CD8-positive, alpha-beta memory T cell (primary cell): ENCODE measurements at regions of chr3 and their contacts with region 1.

Region 1: DNA sequence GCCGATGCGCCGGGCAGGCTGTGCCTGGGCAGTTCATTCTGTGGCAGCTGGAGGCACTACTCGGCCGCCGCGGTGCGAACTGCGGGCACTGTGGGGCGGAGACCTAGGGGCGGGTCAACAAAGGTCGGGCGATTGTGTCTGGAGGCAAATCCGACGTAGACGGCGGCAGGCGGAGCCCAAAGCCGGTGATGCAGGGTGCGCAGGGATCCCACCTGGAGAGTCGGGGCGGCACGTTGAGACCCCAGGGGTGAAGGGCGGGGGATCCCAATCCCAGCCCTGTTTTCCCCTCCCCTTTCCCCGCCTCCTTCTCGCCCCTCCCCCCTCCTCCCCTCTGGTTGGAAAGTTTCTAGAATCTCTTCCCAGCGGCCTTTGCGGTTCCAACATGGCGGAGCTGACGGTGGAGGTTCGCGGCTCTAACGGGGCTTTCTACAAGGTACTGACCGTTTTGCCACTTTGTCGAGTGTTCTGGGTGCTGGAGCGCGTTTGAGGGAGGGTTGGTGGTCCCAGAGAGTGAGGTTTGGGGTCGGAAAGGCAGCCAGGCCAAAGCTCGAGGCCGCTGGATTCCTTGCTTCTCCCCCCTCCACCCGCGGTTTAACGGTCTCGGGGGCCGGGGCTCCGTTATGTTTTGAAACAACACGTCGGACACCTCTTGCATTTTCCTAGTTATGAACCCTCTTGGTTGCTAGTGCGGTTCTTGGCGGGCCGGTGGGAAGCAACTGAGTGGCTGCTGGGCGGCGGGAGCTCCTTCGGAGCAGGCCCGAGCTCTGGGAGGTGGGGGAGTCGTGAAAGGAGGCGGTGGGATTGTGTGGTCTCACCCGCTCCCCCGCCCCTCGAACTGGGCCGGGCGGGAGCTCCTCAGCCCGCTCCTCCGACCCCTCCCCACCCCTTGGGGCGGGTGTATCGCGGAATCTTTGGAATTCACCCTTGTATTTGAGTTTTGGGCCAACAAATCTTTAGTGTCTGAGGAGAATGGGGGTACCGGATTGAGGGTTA is at the start of gene FXR1:
- DNase-seq: peak; percentile 85 to 93 (median 89)
- H3K4me3 ChIP-seq: peak within 1 kb of the TSS; percentile 80
- H3K4me3 Mint-ChIP-seq: peak within 1 kb of the TSS; percentile 91 to 98 (median 95)
- H3K27ac ChIP-seq: peak within 1 kb of the TSS; percentile 94
- H3K27ac Mint-ChIP-seq: peak within 1 kb of the TSS; percentile 91 to 99 (median 98)
- H3K4me1 ChIP-seq: peaks cover 35% of the 10 kb centered on the region
- H3K4me1 Mint-ChIP-seq: peaks cover 62 to 76% (median 74%) of the 10 kb centered on the region in 3 donors
- H3K27me3 ChIP-seq: no peaks in the 10 kb centered on the region
- H3K27me3 Mint-ChIP-seq: peaks cover 0 to 5% of the 10 kb centered on the region in 2 donors
- total RNA-seq, gene FXR1: 135 to 141 TPM

Region 2: DNA sequence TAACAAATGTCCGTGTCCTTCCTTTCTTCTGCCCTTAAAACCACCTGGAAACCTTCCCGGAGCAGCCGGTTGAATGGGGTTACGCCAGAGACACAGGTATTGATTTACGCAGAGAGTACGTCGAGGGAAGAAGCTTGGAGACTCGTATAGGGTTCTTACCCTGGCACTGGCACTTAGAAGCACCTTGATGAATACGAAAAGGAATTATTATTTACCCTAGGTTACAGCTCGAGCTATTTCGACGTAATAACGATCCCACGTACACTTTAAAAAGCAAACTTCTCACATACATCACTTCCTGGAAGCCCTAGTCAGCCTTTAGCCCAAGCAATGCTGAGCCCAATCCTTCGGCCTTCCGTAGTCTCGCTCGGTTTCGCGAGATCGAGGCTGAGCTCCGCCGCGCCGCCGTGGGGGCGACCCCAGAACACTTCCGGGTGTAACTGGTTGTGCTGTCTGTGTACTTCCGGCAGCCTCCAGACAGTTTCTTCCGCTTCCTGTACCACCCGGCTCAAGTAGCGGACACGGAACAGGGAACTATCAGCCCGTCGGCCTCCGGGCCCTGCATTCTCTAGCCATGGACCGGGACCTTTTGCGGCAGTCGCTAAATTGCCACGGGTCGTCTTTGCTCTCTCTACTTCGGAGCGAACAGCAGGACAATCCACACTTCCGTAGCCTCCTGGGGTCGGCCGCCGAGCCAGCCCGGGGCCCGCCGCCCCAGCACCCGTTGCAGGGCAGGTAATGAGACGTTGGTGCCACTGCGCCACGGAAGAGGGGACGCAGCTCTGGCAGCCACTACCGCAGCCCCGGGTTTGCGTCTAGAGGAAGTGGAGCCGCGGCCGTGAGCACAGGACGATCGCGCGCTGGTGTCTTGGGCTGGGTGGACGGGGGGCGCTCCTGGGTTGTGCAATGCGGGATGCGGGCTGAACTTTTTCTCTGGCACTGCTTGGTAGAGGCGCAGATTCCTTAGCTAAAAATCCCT is 310.6 kb before region 1 on chr3 and contains the start of gene TTC14:
- CTCF ChIA-PET with region 1: interaction called, 5 read pairs
- POLR2A ChIA-PET with region 1: interaction called, 13 read pairs
- DNase-seq: peak; percentile 85 to 96 (median 92)
- H3K4me3 ChIP-seq: peak within 1 kb of the TSS; percentile 70
- H3K4me3 Mint-ChIP-seq: peak within 1 kb of the TSS; percentile 91 to 99 (median 97)
- H3K27ac ChIP-seq: peak within 1 kb of the TSS; percentile 86
- H3K27ac Mint-ChIP-seq: peak within 1 kb of the TSS; percentile 96 to 99 (median 98)
- H3K4me1 ChIP-seq: peaks cover 19% of the 10 kb centered on the region
- H3K4me1 Mint-ChIP-seq: peaks cover 32 to 51% (median 47%) of the 10 kb centered on the region in 3 donors
- H3K27me3 ChIP-seq: no peaks in the 10 kb centered on the region
- H3K27me3 Mint-ChIP-seq: peaks cover 7 to 23% of the 10 kb centered on the region in 2 donors
- total RNA-seq, gene TTC14: 37.2 to 43.0 TPM

Region 3: DNA sequence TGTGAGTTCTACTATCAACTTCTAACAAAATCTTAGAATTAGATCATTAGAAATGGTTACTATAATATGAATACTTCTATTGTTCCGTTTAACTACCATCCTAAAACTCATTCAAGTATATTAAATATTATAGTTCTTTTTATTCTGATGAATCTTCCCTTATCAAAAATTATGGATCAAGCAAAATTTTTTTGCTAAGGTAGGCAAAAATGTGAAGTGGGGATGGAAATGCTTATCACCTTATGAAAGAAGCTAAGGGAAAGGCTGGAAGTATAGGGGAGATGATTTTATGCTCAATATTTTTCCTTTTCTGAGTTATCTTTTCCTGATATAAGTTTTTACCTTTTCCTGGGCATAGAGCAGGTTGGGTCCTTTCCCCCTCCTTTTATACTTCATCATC is 192.6 kb before region 1 on chr3:
- CTCF ChIA-PET with region 1: no interaction called
- POLR2A ChIA-PET with region 1: no interaction called
- DNase-seq: no peak
- H3K4me3 ChIP-seq: no peak overlapping the region
- H3K4me3 Mint-ChIP-seq: no peak overlapping the region
- H3K27ac ChIP-seq: no peak overlapping the region
- H3K27ac Mint-ChIP-seq: no peak overlapping the region
- H3K4me1 ChIP-seq: no peaks in the 10 kb centered on the region
- H3K4me1 Mint-ChIP-seq: no peaks in the 10 kb centered on the region
- H3K27me3 ChIP-seq: no peaks in the 10 kb centered on the region
- H3K27me3 Mint-ChIP-seq: peaks cover 2 to 8% of the 10 kb centered on the region in 2 donors

Region 4: GRCh38 chr3:180947761-180948633 is 35.4 kb after region 1 on chr3:
- CTCF ChIA-PET with region 1: no interaction called
- POLR2A ChIA-PET with region 1: interaction called, 11 read pairs
- DNase-seq: no peak
- H3K4me3 ChIP-seq: no peak overlapping the region
- H3K4me3 Mint-ChIP-seq: no peak overlapping the region
- H3K27ac ChIP-seq: no peak overlapping the region
- H3K27ac Mint-ChIP-seq: no peak overlapping the region
- H3K4me1 ChIP-seq: no peaks in the 10 kb centered on the region
- H3K4me1 Mint-ChIP-seq: peaks cover 23 to 32% (median 29%) of the 10 kb centered on the region in 3 donors
- H3K27me3 ChIP-seq: no peaks in the 10 kb centered on the region
- H3K27me3 Mint-ChIP-seq: no peaks in the 10 kb centered on the region

Region 5: GRCh38 chr3:180989291-180990163 is 76.9 kb after region 1 on chr3 and contains the start of gene DNAJC19:
- CTCF ChIA-PET with region 1: no interaction called
- POLR2A ChIA-PET with region 1: interaction called, 10 read pairs
- DNase-seq: peak; percentile 85 to 95 (median 93)
- H3K4me3 ChIP-seq: peak within 1 kb of the TSS; percentile 69
- H3K4me3 Mint-ChIP-seq: peak within 1 kb of the TSS; percentile 89 to 100 (median 98)
- H3K27ac ChIP-seq: peak within 1 kb of the TSS; percentile 76
- H3K27ac Mint-ChIP-seq: peak within 1 kb of the TSS; percentile 90 to 99 (median 96)
- H3K4me1 ChIP-seq: peaks cover 20% of the 10 kb centered on the region
- H3K4me1 Mint-ChIP-seq: peaks cover 32 to 56% (median 50%) of the 10 kb centered on the region in 3 donors
- H3K27me3 ChIP-seq: no peaks in the 10 kb centered on the region
- H3K27me3 Mint-ChIP-seq: peaks cover 0 to 3% of the 10 kb centered on the region in 2 donors
- total RNA-seq, gene DNAJC19: 70.2 to 72.0 TPM

Region 6: DNA sequence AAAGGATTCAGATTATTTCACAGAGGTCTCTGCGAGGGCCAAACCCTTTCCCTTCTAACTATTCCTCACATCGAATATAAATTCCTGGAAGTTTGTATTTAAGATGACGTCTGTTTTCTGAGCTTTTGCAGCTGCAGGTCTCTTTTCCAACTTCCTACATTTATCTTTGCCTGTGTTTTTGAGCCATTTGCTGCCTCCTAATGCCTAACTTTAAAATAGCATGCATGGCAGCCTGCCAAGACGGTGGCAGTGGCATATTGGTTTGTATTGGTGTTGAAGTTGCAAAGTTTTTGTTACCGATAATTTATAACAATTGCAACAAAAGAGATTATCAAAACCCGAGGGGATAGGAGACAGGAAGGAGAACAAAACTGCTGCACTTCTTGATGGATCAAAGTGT is 264.0 kb after region 1 on chr3:
- CTCF ChIA-PET with region 1: no interaction called
- POLR2A ChIA-PET with region 1: no interaction called
- DNase-seq: peak in 1 of 5 donors; percentile 2
- H3K4me3 ChIP-seq: no peak overlapping the region
- H3K4me3 Mint-ChIP-seq: no peak overlapping the region
- H3K27ac ChIP-seq: no peak overlapping the region
- H3K27ac Mint-ChIP-seq: no peak overlapping the region
- H3K4me1 ChIP-seq: no peaks in the 10 kb centered on the region
- H3K4me1 Mint-ChIP-seq: no peaks in the 10 kb centered on the region
- H3K27me3 ChIP-seq: no peaks in the 10 kb centered on the region
- H3K27me3 Mint-ChIP-seq: peaks cover 0 to 5% of the 10 kb centered on the region in 2 donors

Region 7: GRCh38 chr3:181637056-181637455 is 724.5 kb after region 1 on chr3:
- CTCF ChIA-PET with region 1: no interaction called
- POLR2A ChIA-PET with region 1: no interaction called
- DNase-seq: no peak
- H3K4me3 ChIP-seq: no peak overlapping the region
- H3K4me3 Mint-ChIP-seq: no peak overlapping the region
- H3K27ac ChIP-seq: no peak overlapping the region
- H3K27ac Mint-ChIP-seq: no peak overlapping the region
- H3K4me1 ChIP-seq: no peaks in the 10 kb centered on the region
- H3K4me1 Mint-ChIP-seq: no peaks in the 10 kb centered on the region
- H3K27me3 ChIP-seq: no peaks in the 10 kb centered on the region
- H3K27me3 Mint-ChIP-seq: no peaks in the 10 kb centered on the region